Naive thymus-derived CD4-positive, alpha-beta T cell (primary cell): ENCODE measurements at regions of chr6 and their contacts with region 1.

Region 1: GRCh38 chr6:119349323-119350042 is at the start of gene MAN1A1:
- DNase-seq: peak; percentile 79 to 96 (median 90)
- ATAC-seq: peak; percentile 94
- H3K4me3 ChIP-seq: peak within 1 kb of the TSS; percentile 85
- H3K4me3 Mint-ChIP-seq: peak within 1 kb of the TSS; percentile 82 to 99 (median 93)
- H3K27ac ChIP-seq: peak within 1 kb of the TSS; percentile 83
- H3K27ac Mint-ChIP-seq: peak within 1 kb of the TSS; percentile 77 to 96 (median 83)
- H3K4me1 ChIP-seq: peaks cover 9% of the 10 kb centered on the region in 2 donors
- H3K4me1 Mint-ChIP-seq: peaks cover 8 to 60% (median 53%) of the 10 kb centered on the region in 7 donors
- H3K27me3 ChIP-seq: no peaks in the 10 kb centered on the region
- H3K27me3 Mint-ChIP-seq: no peaks in the 10 kb centered on the region
- total RNA-seq, gene MAN1A1: 8.3 to 22.3 (median 8.5) TPM

Region 2: DNA sequence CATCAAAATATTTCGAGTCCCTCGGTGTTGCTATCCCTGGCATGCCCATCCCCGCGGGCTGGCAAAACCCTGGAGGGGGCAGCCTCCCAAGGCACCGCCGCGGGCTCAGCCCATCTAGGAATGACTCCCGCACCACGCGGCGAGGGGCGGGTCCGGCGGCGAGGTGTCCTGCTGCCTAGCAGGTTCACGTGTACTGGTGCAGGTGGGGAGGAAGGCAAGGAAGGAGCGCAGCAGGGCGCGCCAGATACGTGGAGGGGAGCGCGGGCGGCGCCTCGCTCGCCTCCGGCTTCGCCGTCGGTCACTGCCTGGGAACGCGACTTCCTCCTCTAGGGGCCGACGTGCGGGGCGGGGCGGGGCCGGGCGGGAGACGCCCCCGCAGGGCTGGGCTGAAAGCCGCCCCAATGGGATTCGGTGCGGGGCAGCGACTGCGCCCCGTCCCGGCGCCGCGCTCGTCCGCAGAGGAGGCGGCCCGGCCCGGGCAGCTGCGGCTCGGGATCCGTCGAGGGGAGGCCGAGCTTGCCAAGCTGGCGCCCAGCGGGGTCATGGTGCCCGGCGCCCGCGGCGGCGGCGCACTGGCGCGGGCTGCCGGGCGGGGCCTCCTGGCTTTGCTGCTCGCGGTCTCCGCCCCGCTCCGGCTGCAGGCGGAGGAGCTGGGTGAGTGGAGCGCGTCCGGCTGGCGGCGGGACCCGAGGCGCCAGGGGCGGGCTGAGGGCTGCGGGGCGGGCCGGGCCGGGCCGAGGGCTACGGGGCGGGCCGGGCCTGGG is 1867.1 kb before region 1 on chr6 and contains the start of gene DCBLD1:
- CTCF ChIA-PET with region 1: no interaction called
- POLR2A ChIA-PET with region 1: no interaction called
- intact Hi-C with region 1: loop called in 1 of 2 experiments (anchors 10 kb)
- DNase-seq: peak in 8 of 9 donors; percentile 32 to 72 (median 36)
- ATAC-seq: peak; percentile 85
- H3K4me3 ChIP-seq: peak within 1 kb of the TSS; percentile 63
- H3K4me3 Mint-ChIP-seq: peak within 1 kb of the TSS; percentile 87 to 96 (median 91)
- H3K27ac ChIP-seq: no peak within 1 kb of the TSS
- H3K27ac Mint-ChIP-seq: peak within 1 kb of the TSS in 7 of 9 donors; percentile 28 to 84 (median 65)
- H3K4me1 ChIP-seq: peaks cover 8 to 10% of the 10 kb centered on the region in 2 donors
- H3K4me1 Mint-ChIP-seq: peaks cover 15 to 18% (median 16%) of the 10 kb centered on the region in 7 donors
- H3K27me3 ChIP-seq: no peaks in the 10 kb centered on the region
- H3K27me3 Mint-ChIP-seq: peaks cover 45 to 66% (median 53%) of the 10 kb centered on the region in 5 donors
- total RNA-seq, gene DCBLD1: 1.5 to 7.6 (median 5.6) TPM

Region 3: GRCh38 chr6:118651282-118652050 is 698.0 kb before region 1 on chr6 and contains the start of gene CEP85L:
- CTCF ChIA-PET with region 1: no interaction called
- POLR2A ChIA-PET with region 1: no interaction called
- intact Hi-C with region 1: loop called (anchors 2 to 5 kb)
- DNase-seq: peak; percentile 84 to 91 (median 89)
- ATAC-seq: peak; percentile 96
- H3K4me3 ChIP-seq: peak within 1 kb of the TSS; percentile 66
- H3K4me3 Mint-ChIP-seq: peak within 1 kb of the TSS; percentile 91 to 97 (median 94)
- H3K27ac ChIP-seq: peak within 1 kb of the TSS; percentile 87
- H3K27ac Mint-ChIP-seq: peak within 1 kb of the TSS; percentile 88 to 99 (median 94)
- H3K4me1 ChIP-seq: peaks cover 32 to 40% of the 10 kb centered on the region in 2 donors
- H3K4me1 Mint-ChIP-seq: peaks cover 33 to 73% (median 59%) of the 10 kb centered on the region in 7 donors
- H3K27me3 ChIP-seq: no peaks in the 10 kb centered on the region
- H3K27me3 Mint-ChIP-seq: no peaks in the 10 kb centered on the region
- total RNA-seq, gene CEP85L: 51.1 to 89.1 (median 78.6) TPM

Region 4: GRCh38 chr6:118934461-118935330 is 414.8 kb before region 1 on chr6 and contains the start of gene MCM9:
- CTCF ChIA-PET with region 1: no interaction called
- POLR2A ChIA-PET with region 1: interaction called, 3 read pairs
- intact Hi-C with region 1: loop called (anchors 1 to 10 kb)
- DNase-seq: peak; percentile 77 to 93 (median 86)
- ATAC-seq: peak; percentile 92
- H3K4me3 ChIP-seq: peak within 1 kb of the TSS; percentile 98
- H3K4me3 Mint-ChIP-seq: peak within 1 kb of the TSS; percentile 86 to 96 (median 91)
- H3K27ac ChIP-seq: peak within 1 kb of the TSS; percentile 95
- H3K27ac Mint-ChIP-seq: peak within 1 kb of the TSS; percentile 86 to 95 (median 93)
- H3K4me1 ChIP-seq: peaks cover 4 to 8% of the 10 kb centered on the region in 2 donors
- H3K4me1 Mint-ChIP-seq: peaks cover 22 to 47% (median 41%) of the 10 kb centered on the region in 7 donors
- H3K27me3 ChIP-seq: no peaks in the 10 kb centered on the region
- H3K27me3 Mint-ChIP-seq: no peaks in the 10 kb centered on the region
- total RNA-seq, gene MCM9: 21.8 to 33.7 (median 31.1) TPM

Region 5: DNA sequence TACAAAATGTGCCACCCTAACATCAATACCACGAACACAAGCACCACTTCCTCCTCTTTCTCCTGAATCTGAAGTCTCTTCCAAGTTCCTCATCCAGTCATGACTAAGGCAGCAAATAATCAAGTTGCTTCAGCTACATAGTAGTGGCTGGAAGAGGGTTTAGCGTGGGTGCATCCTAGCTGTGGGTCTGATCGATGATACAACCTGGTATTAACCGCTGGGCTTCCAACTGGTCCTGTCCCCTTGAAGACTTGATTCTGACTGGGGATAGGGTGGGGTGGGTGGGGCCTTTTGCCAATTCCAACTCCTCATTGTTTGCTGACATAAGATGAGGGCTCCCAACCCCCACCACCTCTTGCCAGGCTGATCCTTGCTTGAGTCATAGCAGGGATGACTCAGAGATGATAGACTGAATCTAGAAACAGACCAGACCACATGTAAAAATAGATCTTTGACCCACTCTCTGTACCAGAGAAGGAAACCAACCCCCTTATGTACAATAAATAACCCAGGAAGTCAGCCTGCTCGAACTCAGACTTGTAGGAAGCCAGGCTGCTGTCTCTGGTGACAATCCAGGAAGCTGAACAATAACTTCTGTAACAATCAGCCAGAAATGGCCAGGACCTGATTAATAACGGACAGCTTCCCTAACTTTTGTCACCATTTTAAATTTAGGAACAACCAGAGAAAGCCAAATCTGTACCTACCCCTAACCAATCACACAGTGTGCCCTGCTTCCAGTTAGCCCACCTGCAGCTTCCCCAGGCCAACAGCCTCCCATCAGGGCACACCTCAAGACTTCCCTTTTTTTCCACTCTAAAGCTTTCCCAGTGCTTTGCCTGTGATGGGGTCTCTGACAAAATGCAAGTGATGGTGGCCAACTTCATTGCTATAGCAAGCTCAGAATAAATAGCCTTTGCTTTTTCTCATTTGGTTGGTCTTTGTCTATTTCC is 202.1 kb before region 1 on chr6:
- CTCF ChIA-PET with region 1: no interaction called
- POLR2A ChIA-PET with region 1: no interaction called
- intact Hi-C with region 1: loop called in 1 of 2 experiments (anchors 2 kb)
- DNase-seq: peak in 1 of 9 donors; percentile 51
- ATAC-seq: peak; percentile 79
- H3K4me3 ChIP-seq: no peak overlapping the region
- H3K4me3 Mint-ChIP-seq: peak overlapping the region in 1 of 10 donors; percentile 22
- H3K27ac ChIP-seq: no peak overlapping the region
- H3K27ac Mint-ChIP-seq: peak overlapping the region in 1 of 9 donors; percentile 68
- H3K4me1 ChIP-seq: no peaks in the 10 kb centered on the region
- H3K4me1 Mint-ChIP-seq: peaks cover 7 to 41% (median 10%) of the 10 kb centered on the region in 7 donors
- H3K27me3 ChIP-seq: no peaks in the 10 kb centered on the region
- H3K27me3 Mint-ChIP-seq: peaks cover 0 to 4% (median 0%) of the 10 kb centered on the region in 5 donors

Region 6: GRCh38 chr6:119463081-119463626 is 113.7 kb after region 1 on chr6:
- CTCF ChIA-PET with region 1: no interaction called
- POLR2A ChIA-PET with region 1: no interaction called
- intact Hi-C with region 1: loop called in 1 of 2 experiments (anchors 2 kb)
- DNase-seq: no peak
- ATAC-seq: no peak
- H3K4me3 ChIP-seq: no peak overlapping the region
- H3K4me3 Mint-ChIP-seq: peak overlapping the region in 1 of 10 donors; percentile 59
- H3K27ac ChIP-seq: no peak overlapping the region
- H3K27ac Mint-ChIP-seq: peak overlapping the region in 1 of 9 donors; percentile 94
- H3K4me1 ChIP-seq: no peaks in the 10 kb centered on the region
- H3K4me1 Mint-ChIP-seq: peaks cover 0 to 61% (median 4%) of the 10 kb centered on the region in 7 donors
- H3K27me3 ChIP-seq: no peaks in the 10 kb centered on the region
- H3K27me3 Mint-ChIP-seq: no peaks in the 10 kb centered on the region

Region 7: GRCh38 chr6:119566546-119567260 is 217.2 kb after region 1 on chr6:
- CTCF ChIA-PET with region 1: no interaction called
- POLR2A ChIA-PET with region 1: no interaction called
- intact Hi-C with region 1: no loop called
- DNase-seq: no peak
- ATAC-seq: no peak
- H3K4me3 ChIP-seq: no peak overlapping the region
- H3K4me3 Mint-ChIP-seq: no peak overlapping the region
- H3K27ac ChIP-seq: no peak overlapping the region
- H3K27ac Mint-ChIP-seq: no peak overlapping the region
- H3K4me1 ChIP-seq: no peaks in the 10 kb centered on the region
- H3K4me1 Mint-ChIP-seq: peaks cover 0 to 3% (median 0%) of the 10 kb centered on the region in 7 donors
- H3K27me3 ChIP-seq: no peaks in the 10 kb centered on the region
- H3K27me3 Mint-ChIP-seq: peaks cover 0 to 16% (median 7%) of the 10 kb centered on the region in 5 donors

Region 8: DNA sequence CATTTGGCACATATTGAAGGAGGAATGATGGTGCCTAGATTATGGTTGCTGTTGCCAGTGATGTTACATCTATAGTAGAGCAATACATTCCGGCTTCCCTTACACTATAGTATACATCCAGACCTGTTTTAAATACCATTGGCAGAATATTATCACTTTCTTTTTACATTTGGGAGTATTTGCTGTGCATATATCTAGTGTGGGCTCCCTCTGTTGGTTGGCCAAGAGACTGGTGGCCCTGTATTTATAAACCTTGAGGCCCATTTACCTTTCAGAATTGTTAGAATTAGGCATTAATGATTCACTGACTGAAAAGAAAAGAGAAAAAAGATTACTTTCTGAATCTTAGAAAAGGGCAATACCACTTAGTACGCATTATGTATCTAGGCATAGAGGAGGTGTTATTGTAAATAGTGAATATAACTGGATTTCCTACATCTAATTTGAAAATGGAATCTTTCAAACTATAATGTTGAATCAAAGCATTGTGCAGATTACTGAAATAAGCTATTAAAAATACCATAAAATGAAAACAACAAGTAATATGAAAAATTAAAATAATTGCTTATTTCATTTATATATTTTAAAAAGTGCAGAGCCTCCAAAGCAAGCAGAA is 628.9 kb after region 1 on chr6:
- CTCF ChIA-PET with region 1: no interaction called
- POLR2A ChIA-PET with region 1: no interaction called
- intact Hi-C with region 1: loop called (anchors 1 to 5 kb)
- DNase-seq: no peak
- ATAC-seq: no peak
- H3K4me3 ChIP-seq: no peak overlapping the region
- H3K4me3 Mint-ChIP-seq: no peak overlapping the region
- H3K27ac ChIP-seq: no peak overlapping the region
- H3K27ac Mint-ChIP-seq: no peak overlapping the region
- H3K4me1 ChIP-seq: no peaks in the 10 kb centered on the region
- H3K4me1 Mint-ChIP-seq: peaks cover 0 to 4% (median 0%) of the 10 kb centered on the region in 7 donors
- H3K27me3 ChIP-seq: no peaks in the 10 kb centered on the region
- H3K27me3 Mint-ChIP-seq: no peaks in the 10 kb centered on the region